ENCODE measurements at regions of chr4 and their contacts with region 1.

Region 1: GRCh38 chr4:6640292-6641163 is at the start of gene MRFAP1:
- DNase-seq: peak; percentile 96
- H3K4me3 Mint-ChIP-seq: peak within 1 kb of the TSS; percentile 98
- H3K27ac Mint-ChIP-seq: peak within 1 kb of the TSS; percentile 99
- H3K4me1 Mint-ChIP-seq: peaks cover 28% of the 10 kb centered on the region
- H3K27me3 Mint-ChIP-seq: no peaks in the 10 kb centered on the region
- total RNA-seq, gene MRFAP1: 150 to 151 TPM

Region 2: DNA sequence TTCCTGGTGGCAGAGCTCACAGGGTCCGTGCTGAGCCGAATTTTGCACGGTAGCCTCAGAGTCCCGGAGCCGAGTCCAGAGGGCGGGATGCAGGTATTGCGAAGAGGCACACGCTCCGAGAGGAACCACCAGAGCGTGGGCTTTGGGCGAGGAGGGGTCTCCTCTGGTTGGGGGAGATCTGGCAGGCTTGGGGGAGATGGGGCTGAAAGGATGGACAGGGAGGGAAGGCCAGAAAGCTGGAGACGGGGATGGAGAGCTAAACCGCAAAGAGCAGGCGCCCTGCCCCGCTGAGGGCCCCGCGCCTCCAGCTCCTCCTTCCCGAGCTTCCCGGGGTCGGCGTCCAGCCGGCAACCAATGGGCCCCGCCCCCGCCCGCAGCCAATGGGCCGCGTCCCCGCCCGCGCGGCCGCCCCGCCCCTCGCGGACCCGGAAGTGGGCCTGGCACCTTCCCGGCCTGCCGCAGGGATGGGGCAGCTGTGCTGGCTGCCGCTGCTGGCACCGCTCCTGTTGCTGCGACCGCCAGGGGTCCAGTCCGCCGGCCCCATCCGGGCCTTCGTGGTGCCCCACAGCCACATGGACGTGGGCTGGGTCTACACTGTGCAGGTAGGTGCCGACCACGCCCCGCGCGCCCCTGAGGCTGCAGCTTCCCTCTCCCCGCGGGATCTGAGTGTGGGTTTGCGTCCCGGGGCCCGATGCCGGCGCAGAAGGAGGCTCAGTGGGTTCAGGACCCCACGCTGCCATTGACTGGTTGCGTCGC is 65.6 kb before region 1 on chr4 and contains the start of gene MAN2B2:
- CTCF ChIA-PET with region 1: no interaction called
- intact Hi-C with region 1: loop called (anchors 1 kb)
- DNase-seq: peak; percentile 83
- H3K4me3 Mint-ChIP-seq: peak within 1 kb of the TSS; percentile 84
- H3K27ac Mint-ChIP-seq: peak within 1 kb of the TSS; percentile 60
- H3K4me1 Mint-ChIP-seq: peaks cover 4% of the 10 kb centered on the region
- H3K27me3 Mint-ChIP-seq: no peaks in the 10 kb centered on the region
- total RNA-seq, gene MAN2B2: 12.7 to 12.8 TPM

Region 3: GRCh38 chr4:6695660-6696630 is 55.4 kb after region 1 on chr4:
- CTCF ChIA-PET with region 1: interaction called, 3 read pairs
- intact Hi-C with region 1: loop called (anchors 2 kb)
- DNase-seq: peak; percentile 63
- H3K4me3 Mint-ChIP-seq: peak overlapping the region; percentile 65
- H3K27ac Mint-ChIP-seq: peak overlapping the region; percentile 96
- H3K4me1 Mint-ChIP-seq: peaks cover 82% of the 10 kb centered on the region
- H3K27me3 Mint-ChIP-seq: no peaks in the 10 kb centered on the region

Region 4: DNA sequence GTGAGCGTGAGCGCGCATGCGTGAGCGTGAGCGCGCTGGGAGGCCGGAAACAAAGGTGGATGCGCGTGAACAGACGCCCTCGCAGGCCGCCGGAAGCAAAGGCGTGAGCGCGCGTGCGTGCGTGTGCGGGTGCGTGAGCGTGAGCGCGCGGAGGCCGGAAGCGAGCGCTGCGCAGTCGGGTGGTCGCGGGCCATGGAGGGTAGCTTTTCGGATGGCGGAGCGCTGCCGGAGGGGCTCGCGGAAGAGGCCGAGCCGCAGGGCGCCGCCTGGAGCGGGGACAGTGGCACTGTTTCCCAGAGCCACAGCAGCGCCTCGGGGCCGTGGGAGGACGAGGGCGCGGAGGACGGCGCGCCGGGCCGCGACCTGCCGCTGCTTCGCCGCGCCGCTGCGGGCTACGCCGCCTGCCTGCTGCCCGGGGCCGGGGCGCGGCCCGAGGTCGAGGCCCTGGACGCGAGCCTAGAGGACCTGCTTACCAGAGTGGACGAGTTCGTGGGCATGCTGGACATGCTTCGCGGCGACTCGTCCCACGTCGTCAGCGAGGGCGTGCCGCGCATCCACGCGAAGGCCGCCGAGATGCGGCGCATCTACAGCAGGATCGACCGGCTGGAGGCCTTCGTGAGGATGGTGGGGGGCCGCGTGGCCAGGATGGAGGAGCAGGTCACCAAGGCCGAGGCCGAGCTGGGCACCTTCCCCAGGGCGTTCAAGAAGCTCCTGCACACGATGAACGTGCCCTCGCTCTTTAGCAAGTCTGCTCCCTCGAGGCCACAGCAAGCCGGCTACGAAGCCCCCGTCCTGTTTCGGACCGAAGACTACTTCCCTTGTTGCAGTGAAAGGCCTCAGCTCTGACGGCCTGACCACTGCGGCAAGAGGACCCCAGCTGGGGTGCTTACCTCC is 75.7 kb after region 1 on chr4 and contains the start of gene BLOC1S4:
- CTCF ChIA-PET with region 1: no interaction called
- intact Hi-C with region 1: loop called (anchors 1 kb)
- DNase-seq: peak; percentile 88
- H3K4me3 Mint-ChIP-seq: peak within 1 kb of the TSS; percentile 96
- H3K27ac Mint-ChIP-seq: peak within 1 kb of the TSS; percentile 95
- H3K4me1 Mint-ChIP-seq: peaks cover 26% of the 10 kb centered on the region
- H3K27me3 Mint-ChIP-seq: no peaks in the 10 kb centered on the region
- total RNA-seq, gene BLOC1S4: 11.0 to 11.8 TPM

Region 5: DNA sequence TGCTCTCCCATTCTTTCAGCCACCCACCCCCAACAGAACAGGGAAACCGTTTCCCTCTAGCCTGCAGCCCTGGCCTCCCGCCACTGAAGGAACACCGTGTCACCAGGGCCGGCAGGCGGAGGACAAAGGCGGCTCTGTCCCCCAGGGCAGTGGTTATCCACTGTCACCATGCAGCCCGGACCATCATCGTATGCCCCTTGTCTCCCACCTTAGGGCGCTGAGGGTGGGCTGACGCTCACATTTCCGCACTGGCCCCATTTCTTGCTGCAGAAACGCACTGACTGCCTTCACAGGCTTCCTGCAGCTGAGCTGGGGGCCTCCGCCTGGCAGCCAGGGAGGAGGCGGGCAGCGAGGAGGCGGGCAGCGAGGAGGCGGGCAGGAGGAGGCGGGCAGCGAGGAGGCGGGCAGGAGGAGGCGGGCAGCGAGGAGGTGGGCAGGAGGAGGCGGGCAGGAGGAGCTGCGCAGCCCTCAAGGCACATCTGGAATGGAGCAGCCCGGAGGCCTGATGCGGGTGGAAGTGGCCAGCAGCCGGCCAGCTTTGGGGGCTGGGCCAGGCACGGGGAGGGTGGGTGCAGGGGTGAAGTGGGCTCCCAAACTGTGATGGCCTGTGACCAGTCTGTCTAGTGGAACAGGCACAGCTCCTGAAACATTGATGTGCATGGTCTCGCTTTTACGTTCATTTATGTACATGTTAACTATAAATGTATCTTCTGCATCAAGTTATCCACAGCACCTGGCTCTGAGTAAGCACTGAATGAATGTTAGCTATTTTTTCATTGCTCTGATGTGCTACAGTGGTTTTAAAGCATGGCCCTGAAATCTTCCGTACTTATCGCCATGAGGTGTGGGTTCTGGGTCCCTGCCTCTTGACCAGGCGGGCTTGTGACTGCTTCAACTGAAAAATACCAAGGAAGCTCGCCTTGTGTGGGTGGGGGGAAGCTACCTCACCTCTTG is 121.4 kb after region 1 on chr4:
- CTCF ChIA-PET with region 1: no interaction called
- intact Hi-C with region 1: no loop called
- DNase-seq: no peak
- H3K4me3 Mint-ChIP-seq: no peak overlapping the region
- H3K27ac Mint-ChIP-seq: no peak overlapping the region
- H3K4me1 Mint-ChIP-seq: peaks cover 2% of the 10 kb centered on the region
- H3K27me3 Mint-ChIP-seq: no peaks in the 10 kb centered on the region

Region 6: GRCh38 chr4:6909073-6909965 is 268.8 kb after region 1 on chr4 and contains the start of gene TBC1D14:
- CTCF ChIA-PET with region 1: no interaction called
- intact Hi-C with region 1: loop called (anchors 1 kb)
- DNase-seq: peak; percentile 88
- H3K4me3 Mint-ChIP-seq: peak within 1 kb of the TSS; percentile 92
- H3K27ac Mint-ChIP-seq: peak within 1 kb of the TSS; percentile 86
- H3K4me1 Mint-ChIP-seq: peaks cover 45% of the 10 kb centered on the region
- H3K27me3 Mint-ChIP-seq: peaks cover 3% of the 10 kb centered on the region
- total RNA-seq, gene TBC1D14: 23.6 to 24.6 TPM

Region 7: DNA sequence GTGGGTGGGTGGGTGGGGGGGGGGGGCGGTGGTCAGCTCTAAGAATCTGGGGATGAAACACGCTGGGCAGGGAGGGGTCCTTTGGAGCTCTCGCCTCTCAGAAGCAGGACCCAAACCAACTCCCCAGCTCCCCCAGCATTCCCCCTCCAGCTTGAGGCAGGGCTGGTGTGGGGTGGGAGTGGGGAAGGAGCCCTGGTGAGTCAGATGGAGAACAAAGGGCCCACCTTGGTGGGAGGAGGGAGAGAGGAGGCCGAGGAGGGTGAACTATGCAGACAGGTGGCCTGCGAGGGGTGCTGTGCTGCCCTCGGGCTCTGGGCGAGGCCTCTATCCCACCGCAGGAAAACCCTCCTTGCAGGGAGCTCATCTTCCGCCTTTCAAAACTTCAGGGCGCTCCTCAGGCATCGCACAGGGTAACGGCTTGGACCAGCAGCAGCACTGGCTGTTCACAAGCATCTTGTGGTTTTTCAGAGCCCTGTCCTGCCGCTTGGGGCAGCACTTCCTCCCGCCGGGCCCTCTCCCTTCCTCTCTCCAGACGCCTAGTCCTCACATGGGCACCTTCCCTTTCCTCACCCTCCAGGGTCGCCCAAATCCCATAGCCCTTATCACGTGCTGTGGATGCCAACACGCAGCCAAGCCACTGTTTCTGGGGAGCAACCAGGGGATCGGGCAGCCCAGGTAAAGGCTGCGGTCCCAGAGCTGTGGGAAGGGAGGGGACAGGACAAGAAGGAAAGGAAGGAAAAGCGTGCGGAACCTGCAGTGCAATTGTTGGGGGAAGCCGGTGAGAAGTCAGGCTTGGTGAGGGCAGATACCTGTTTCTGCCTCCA is 461.4 kb after region 1 on chr4:
- CTCF ChIA-PET with region 1: no interaction called
- intact Hi-C with region 1: loop called (anchors 1 kb)
- DNase-seq: peak; percentile 79
- H3K4me3 Mint-ChIP-seq: peak overlapping the region; percentile 90
- H3K27ac Mint-ChIP-seq: no peak overlapping the region
- H3K4me1 Mint-ChIP-seq: peaks cover 8% of the 10 kb centered on the region
- H3K27me3 Mint-ChIP-seq: no peaks in the 10 kb centered on the region

Measured in activated naive CD4-positive, alpha-beta T cell treated with anti-CD3 and anti-CD28 coated beads for 36 hours (primary cell).